ENCODE measurements at regions of chr5 and their contacts with region 1.

Region 1: DNA sequence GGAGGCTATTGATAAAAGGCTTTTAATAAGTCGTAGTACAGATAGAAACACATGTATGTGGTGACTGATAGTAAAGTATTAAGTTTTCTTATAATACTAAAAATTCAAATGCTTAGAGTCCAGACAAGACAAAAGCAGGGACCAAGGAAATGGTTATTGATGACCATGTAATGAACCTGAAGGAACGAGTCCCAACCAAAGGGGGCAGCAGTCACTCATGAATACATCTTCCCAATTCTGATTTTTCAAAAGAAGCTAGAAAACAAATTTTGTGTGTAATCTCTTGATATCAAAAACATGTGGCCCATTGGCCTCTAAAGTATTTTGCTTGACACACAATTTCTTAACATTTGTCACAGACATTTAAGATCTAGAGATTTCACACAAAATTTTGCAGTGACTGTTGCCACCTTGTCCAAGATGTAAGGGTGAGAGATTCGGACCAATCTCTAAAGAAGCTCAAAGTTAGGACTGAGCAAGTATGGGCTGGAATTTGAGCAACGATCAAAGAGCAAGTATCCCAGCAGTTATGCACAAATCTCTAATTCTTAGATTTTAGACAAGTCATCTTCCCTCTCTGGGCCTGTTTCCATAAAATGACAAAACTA is 66.8 kb downstream of the ARL15 start:
- DNase-seq: peak in 1 of 2 donors; percentile 34
- ATAC-seq: peak; percentile 56

Region 2: GRCh38 chr5:54415896-54416601 is 172.5 kb after region 1 on chr5:
- intact Hi-C with region 1: loop called in 1 of 2 experiments (anchors 5 kb)
- DNase-seq: no peak
- ATAC-seq: no peak

Region 3: GRCh38 chr5:54480296-54480695 is 236.7 kb after region 1 on chr5:
- intact Hi-C with region 1: loop called in 1 of 2 experiments (anchors 5 kb)
- DNase-seq: no peak
- ATAC-seq: no peak

Measured in left colon (tissue), 2 donors.